GM18951 (cell line): ENCODE measurements at regions of chr1 and their contacts with region 1.

Region 1: GRCh38 chr1:237124856-237125462 is 83.0 kb downstream of the RYR2 start:
- POLR2A ChIP-seq: no peak

Region 2: GRCh38 chr1:236083650-236084385 is 1041.1 kb before region 1 on chr1:
- in situ Hi-C with region 1: loop called (anchors 25 kb)
- POLR2A ChIP-seq: no peak

Region 3: GRCh38 chr1:236904874-236905741 is 219.9 kb before region 1 on chr1:
- in situ Hi-C with region 1: no loop called
- POLR2A ChIP-seq: no peak